AG04450 (cell line): ENCODE measurements at regions of chr4 and their contacts with region 1.

Region 1: DNA sequence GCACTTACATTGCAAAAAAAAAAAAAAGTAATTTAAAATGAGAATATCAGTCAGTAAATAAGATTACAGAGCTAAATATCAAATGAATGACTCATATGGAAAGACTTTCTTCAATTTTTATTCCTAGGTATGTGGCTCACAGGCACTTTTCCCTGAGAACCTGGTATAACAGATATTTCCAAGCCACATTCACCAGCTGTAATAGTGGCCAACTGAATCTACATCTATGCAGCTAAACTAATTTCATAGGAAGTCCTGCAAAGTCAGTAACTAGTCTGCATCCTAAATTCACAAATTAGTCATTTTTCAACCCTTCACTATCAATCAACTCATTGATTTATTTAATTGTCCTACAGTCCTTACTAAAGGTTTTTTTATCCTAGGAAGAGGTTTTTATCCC is 5.6 kb downstream of the PDE5A start:
- DNase-seq: no peak
- H3K4me3 ChIP-seq: peak overlapping the region; percentile 85
- H3K27ac ChIP-seq: no peak overlapping the region
- H3K27me3 ChIP-seq: no peaks in the 10 kb centered on the region
- CTCF ChIP-seq: no peak

Region 2: DNA sequence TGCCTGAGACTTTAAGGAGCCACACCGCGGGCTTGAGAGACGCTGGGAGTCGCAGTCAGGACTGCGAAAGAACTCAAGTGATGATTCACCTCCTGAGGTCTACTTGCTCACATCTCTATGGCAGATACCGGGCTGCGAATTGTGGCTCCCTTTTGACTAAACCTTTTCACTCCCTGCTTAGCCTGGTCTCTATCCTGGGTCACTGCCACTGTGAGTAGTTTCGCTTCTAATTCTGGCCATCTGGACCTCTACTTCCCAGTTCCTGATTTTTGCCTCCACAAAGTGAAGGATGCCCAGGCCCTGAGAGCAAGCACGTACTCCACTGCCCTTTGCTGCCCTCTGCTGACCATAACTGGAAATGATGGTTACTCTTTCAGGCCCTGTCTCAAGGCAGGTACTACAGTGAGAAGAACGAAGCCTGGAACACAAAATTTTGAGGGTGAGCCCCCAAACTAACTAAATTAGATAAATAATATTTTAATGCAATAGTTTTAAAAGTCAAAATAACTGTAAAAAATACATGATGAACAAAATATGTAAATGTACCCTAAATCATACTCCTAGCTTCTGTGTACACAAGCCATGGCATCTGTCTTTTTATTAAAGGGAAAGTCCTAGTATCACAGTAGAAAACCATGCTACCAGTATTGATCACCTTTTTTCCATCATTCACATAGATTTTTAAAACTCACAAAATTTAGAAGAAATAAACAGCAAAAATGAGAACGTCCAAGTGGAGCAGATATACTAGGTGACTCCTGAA is 426.9 kb after region 1 on chr4:
- CTCF ChIA-PET with region 1: interaction called, 175 read pairs
- POLR2A ChIA-PET with region 1: interaction called, 19 read pairs
- DNase-seq: peak; percentile 78
- H3K4me3 ChIP-seq: peak overlapping the region; percentile 31
- H3K27ac ChIP-seq: peak overlapping the region; percentile 71
- H3K27me3 ChIP-seq: no peaks in the 10 kb centered on the region
- CTCF ChIP-seq: peak; percentile 90